ENCODE measurements at regions of chr7 and their contacts with region 1.

Region 1: GRCh38 chr7:41206267-41206666 is 496.6 kb downstream of the INHBA start:
- DNase-seq: peak in 1 of 2 experiments; percentile 47
- H3K4me3 ChIP-seq: no peak overlapping the region
- H3K4me3 Mint-ChIP-seq: peak overlapping the region; percentile 68
- H3K27ac Mint-ChIP-seq: peak overlapping the region; percentile 84
- H3K4me1 ChIP-seq: peaks cover 20% of the 10 kb centered on the region
- H3K4me1 Mint-ChIP-seq: peaks cover 16% of the 10 kb centered on the region
- H3K27me3 ChIP-seq: no peaks in the 10 kb centered on the region
- H3K27me3 Mint-ChIP-seq: no peaks in the 10 kb centered on the region
- CTCF ChIP-seq: no peak

Region 2: GRCh38 chr7:41134300-41135250 is 71.7 kb before region 1 on chr7:
- CTCF ChIA-PET with region 1: no interaction called
- POLR2A ChIA-PET with region 1: no interaction called
- intact Hi-C with region 1: no loop called
- DNase-seq: no peak
- H3K4me3 ChIP-seq: no peak overlapping the region
- H3K4me3 Mint-ChIP-seq: no peak overlapping the region
- H3K27ac Mint-ChIP-seq: no peak overlapping the region
- H3K4me1 ChIP-seq: no peaks in the 10 kb centered on the region
- H3K4me1 Mint-ChIP-seq: no peaks in the 10 kb centered on the region
- H3K27me3 ChIP-seq: no peaks in the 10 kb centered on the region
- H3K27me3 Mint-ChIP-seq: no peaks in the 10 kb centered on the region
- CTCF ChIP-seq: no peak

Region 3: GRCh38 chr7:41224063-41224806 is 18.0 kb after region 1 on chr7:
- CTCF ChIA-PET with region 1: no interaction called
- POLR2A ChIA-PET with region 1: no interaction called
- intact Hi-C with region 1: loop called (anchors 1 kb)
- DNase-seq: peak; percentile 45 to 63
- H3K4me3 ChIP-seq: no peak overlapping the region
- H3K4me3 Mint-ChIP-seq: no peak overlapping the region
- H3K27ac Mint-ChIP-seq: no peak overlapping the region
- H3K4me1 ChIP-seq: peaks cover 15% of the 10 kb centered on the region
- H3K4me1 Mint-ChIP-seq: peaks cover 10% of the 10 kb centered on the region
- H3K27me3 ChIP-seq: no peaks in the 10 kb centered on the region
- H3K27me3 Mint-ChIP-seq: no peaks in the 10 kb centered on the region
- CTCF ChIP-seq: no peak

Region 4: GRCh38 chr7:41238851-41239331 is 32.6 kb after region 1 on chr7:
- CTCF ChIA-PET with region 1: no interaction called
- POLR2A ChIA-PET with region 1: no interaction called
- intact Hi-C with region 1: loop called (anchors 1 kb)
- DNase-seq: no peak
- H3K4me3 ChIP-seq: no peak overlapping the region
- H3K4me3 Mint-ChIP-seq: no peak overlapping the region
- H3K27ac Mint-ChIP-seq: no peak overlapping the region
- H3K4me1 ChIP-seq: peaks cover 55% of the 10 kb centered on the region
- H3K4me1 Mint-ChIP-seq: peaks cover 51% of the 10 kb centered on the region
- H3K27me3 ChIP-seq: no peaks in the 10 kb centered on the region
- H3K27me3 Mint-ChIP-seq: no peaks in the 10 kb centered on the region
- CTCF ChIP-seq: no peak

Region 5: DNA sequence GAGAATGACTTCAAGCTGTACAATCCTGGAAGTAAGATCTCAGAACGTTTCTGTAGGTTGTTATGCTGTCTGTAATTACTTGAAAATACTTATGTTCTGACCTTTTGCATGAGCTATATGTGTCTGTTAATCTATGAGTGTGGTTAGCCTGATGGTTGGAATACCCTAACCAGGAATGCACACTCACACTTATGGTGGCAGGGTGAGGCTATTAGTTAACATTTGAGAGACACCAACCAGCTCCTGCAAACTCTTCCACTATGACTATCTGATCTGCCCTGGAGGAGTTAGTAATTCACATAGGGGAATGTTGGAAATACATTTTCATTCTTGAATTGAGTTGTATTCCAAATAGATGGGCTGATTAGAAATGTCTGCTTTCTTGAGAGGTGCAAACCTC is 46.3 kb after region 1 on chr7:
- CTCF ChIA-PET with region 1: no interaction called
- POLR2A ChIA-PET with region 1: no interaction called
- intact Hi-C with region 1: no loop called
- DNase-seq: no peak
- H3K4me3 ChIP-seq: no peak overlapping the region
- H3K4me3 Mint-ChIP-seq: no peak overlapping the region
- H3K27ac Mint-ChIP-seq: no peak overlapping the region
- H3K4me1 ChIP-seq: peaks cover 11% of the 10 kb centered on the region; the same call in 1 of the 2 replicates
- H3K4me1 Mint-ChIP-seq: peaks cover 36% of the 10 kb centered on the region
- H3K27me3 ChIP-seq: no peaks in the 10 kb centered on the region
- H3K27me3 Mint-ChIP-seq: no peaks in the 10 kb centered on the region
- CTCF ChIP-seq: no peak